HepG2 (cell line): ENCODE measurements at regions of chr7 and their contacts with region 1.

Region 1: DNA sequence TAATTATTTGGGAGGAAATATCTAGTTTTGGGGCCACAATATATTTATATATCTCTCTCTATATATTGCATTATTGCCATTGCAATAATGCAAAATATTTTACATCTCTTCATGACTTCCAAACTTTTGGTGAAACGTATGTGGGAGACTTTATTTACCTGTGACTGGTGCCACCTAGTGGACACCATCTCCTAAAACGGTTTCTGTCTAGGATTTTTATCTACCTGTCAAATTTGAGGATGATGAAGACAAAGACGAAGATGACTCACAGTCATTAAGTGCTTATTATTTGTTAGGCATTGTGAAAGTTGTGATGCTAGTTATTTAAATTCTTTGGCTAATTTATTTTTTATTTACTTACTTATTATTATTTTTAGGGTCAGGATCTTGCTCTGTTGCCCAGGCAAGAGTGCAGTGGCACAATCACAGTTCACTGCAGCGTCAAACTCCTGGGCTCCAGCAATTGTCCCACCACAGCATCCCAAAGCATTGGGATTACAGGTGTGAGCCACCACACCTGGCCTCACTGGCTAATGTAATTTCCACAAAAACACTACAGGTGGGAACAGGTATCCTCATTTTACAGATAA is 18.7 kb upstream of the CBLL1 start:
- DNase-seq: peak; percentile 52
- ATAC-seq: no peak
- H3K4me3 ChIP-seq: no peak overlapping the region
- H3K27ac ChIP-seq: no peak overlapping the region
- H3K4me1 ChIP-seq: no peaks in the 10 kb centered on the region
- H3K27me3 ChIP-seq: no peaks in the 10 kb centered on the region; a peak in 1 of 5 replicates
- CTCF ChIP-seq: peak; percentile 73
- EP300 ChIP-seq: no peak
- POLR2A ChIP-seq: no peak
- RAD21 ChIP-seq: peak; percentile 35; the same call in 1 of the 2 replicates

Region 2: GRCh38 chr7:107150375-107151073 is 574.7 kb before region 1 on chr7:
- CTCF ChIA-PET with region 1: no interaction called
- POLR2A ChIA-PET with region 1: no interaction called
- in situ Hi-C with region 1: no loop called
- intact Hi-C with region 1: loop called (anchors 1 kb)
- DNase-seq: peak; percentile 40
- ATAC-seq: peak; percentile 53; the same call in 1 of the 3 replicates
- H3K4me3 ChIP-seq: no peak overlapping the region
- H3K27ac ChIP-seq: no peak overlapping the region
- H3K4me1 ChIP-seq: no peaks in the 10 kb centered on the region
- H3K27me3 ChIP-seq: peaks cover 2 to 3% of the 10 kb centered on the region in 2 experiments; a peak in 3 of 5 replicates
- CTCF ChIP-seq: peak; percentile 59
- EP300 ChIP-seq: no peak
- POLR2A ChIP-seq: no peak
- RAD21 ChIP-seq: no peak

Region 3: DNA sequence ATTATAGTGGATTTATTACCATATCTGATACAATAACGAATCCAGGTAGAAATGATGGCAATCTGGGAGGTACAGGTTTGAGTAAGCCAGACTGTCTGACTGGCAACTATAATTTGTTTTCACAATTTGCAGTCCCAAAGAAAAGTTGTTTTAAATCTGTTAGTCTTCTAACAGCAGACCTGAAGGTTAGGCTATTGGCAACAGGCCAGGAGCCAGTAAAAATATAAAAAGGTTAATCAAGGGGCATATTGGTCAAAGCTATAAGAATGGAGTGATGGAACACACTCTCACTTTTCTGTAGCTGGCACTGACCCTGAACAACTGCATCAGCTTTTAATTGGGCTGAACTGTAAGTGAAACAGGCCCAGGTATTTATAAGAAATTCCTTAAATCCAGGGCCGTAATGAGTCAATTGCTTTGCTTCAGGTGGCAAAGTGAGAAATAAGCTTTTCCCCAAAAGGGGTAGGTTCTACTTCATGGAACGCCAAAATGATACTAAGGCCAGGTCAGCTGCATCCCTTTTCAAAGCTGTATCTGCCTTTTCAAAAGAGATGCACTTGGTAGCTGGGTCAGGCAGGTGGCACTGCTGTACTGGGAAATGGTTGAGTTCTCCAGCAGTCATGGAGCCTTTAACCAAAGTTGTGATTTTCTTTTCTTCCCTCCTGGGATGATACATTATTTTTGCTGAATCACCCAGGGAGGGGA is 262.4 kb before region 1 on chr7:
- CTCF ChIA-PET with region 1: interaction called, 16 read pairs
- POLR2A ChIA-PET with region 1: no interaction called
- in situ Hi-C with region 1: loop called (anchors 5 kb)
- intact Hi-C with region 1: loop called (anchors 1 kb)
- DNase-seq: peak; percentile 52
- ATAC-seq: peak; percentile 94
- H3K4me3 ChIP-seq: no peak overlapping the region
- H3K27ac ChIP-seq: no peak overlapping the region
- H3K4me1 ChIP-seq: no peaks in the 10 kb centered on the region
- H3K27me3 ChIP-seq: no peaks in the 10 kb centered on the region
- CTCF ChIP-seq: peak; percentile 82
- EP300 ChIP-seq: no peak
- POLR2A ChIP-seq: no peak
- RAD21 ChIP-seq: peak; percentile 74

Region 4: DNA sequence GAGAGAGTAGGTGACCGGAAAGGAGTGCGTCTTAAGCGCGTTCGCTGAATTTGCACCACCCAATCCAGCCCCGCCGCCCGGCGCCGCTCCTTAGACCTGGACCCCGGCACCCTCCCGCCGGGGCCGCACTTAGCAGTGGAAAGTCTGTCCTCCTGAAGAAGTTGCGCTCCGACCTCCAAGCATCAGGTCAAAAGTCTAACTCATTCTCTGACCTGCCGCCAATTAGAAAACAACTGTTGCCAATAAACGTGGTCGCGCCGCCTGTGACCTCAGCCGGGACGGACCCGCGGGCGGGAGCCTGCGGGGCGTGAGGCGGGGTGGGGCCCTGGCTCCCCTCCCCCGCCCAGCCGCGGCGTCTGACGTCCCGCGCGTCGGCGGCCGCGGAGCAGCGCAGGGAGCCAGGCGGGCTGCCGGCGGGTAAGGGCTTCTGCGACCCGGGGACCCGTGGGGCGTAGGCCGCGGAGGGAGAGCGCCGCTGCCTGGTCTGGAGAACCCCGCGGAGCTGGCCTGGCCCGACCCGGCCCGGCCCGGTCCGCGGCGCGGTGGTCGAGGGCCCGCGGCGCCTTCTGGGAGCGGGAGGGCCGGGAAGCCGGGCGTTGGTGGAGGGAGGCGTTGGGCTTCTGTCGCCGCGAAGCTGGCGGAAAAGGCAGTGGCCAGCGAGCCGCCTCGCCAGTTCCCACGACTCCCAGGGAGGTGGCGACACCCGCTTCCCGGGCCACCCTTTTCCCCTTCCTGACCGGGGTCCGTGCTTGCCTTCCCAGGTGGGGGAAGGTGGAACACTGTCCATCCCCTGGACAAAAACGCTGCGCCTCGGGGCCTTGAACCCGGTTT is 145.1 kb before region 1 on chr7 and contains the start of gene BCAP29:
- CTCF ChIA-PET with region 1: no interaction called
- POLR2A ChIA-PET with region 1: no interaction called
- in situ Hi-C with region 1: no loop called
- intact Hi-C with region 1: loop called (anchors 5 kb)
- DNase-seq: peak; percentile 67
- ATAC-seq: peak; percentile 95
- H3K4me3 ChIP-seq: peak within 1 kb of the TSS; percentile 86 to 95 (median 87)
- H3K27ac ChIP-seq: peak within 1 kb of the TSS; percentile 91
- H3K4me1 ChIP-seq: peaks cover 11% of the 10 kb centered on the region
- H3K27me3 ChIP-seq: no peaks in the 10 kb centered on the region
- CTCF ChIP-seq: peak; percentile 72
- EP300 ChIP-seq: peak in 1 of 2 experiments; percentile 23; a peak in 1 of 4 replicates
- POLR2A ChIP-seq: peak; percentile 71 to 77
- RAD21 ChIP-seq: peak; percentile 81
- total RNA-seq, gene BCAP29: 27.8 and 35.6 TPM in 2 replicates